ENCODE measurements at regions of chr2 and their contacts with region 1.

Region 1: DNA sequence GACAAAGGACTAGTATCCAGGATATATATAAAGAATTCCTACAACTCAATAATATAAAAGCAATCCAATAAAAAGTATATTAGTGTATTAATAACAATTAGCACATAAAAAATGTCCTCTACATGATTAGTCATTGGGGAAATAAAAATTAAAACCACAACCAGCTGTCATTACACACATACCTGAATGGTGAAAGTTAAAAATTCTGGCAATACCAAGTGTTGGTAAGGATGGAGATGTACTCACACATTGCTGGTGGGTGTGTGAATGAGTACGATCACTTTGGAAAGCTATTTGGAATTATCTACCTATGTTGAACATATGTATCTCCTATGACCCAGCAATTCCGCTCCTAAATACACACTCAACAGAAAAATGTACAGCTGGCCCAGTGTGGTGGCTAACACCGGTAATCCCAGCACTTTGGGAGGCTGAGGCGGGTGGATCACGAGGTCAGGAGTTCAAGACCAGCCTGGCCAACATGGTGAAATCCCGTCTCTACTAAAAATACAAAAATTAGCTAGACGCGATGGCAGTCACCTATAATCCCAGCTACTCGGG is 14.3 kb upstream of the NOL10 start:
- DNase-seq: no peak
- ATAC-seq: no peak
- H3K4me3 ChIP-seq: no peak overlapping the region
- H3K4me3 Mint-ChIP-seq: no peak overlapping the region
- H3K27ac ChIP-seq: no peak overlapping the region
- H3K27ac Mint-ChIP-seq: no peak overlapping the region
- H3K4me1 ChIP-seq: no peaks in the 10 kb centered on the region
- H3K4me1 Mint-ChIP-seq: no peaks in the 10 kb centered on the region
- H3K27me3 ChIP-seq: peaks cover 0 to 22% of the 10 kb centered on the region in 2 experiments
- H3K27me3 Mint-ChIP-seq: peaks cover 23 to 27% of the 10 kb centered on the region in 2 donors

Region 2: GRCh38 chr2:10629819-10630532 is 74.1 kb before region 1 on chr2:
- CTCF ChIA-PET with region 1: no interaction called
- POLR2A ChIA-PET with region 1: interaction called in 1 of 2 experiments, 15 read pairs
- DNase-seq: no peak
- ATAC-seq: no peak
- H3K4me3 ChIP-seq: no peak overlapping the region
- H3K4me3 Mint-ChIP-seq: no peak overlapping the region
- H3K27ac ChIP-seq: no peak overlapping the region
- H3K27ac Mint-ChIP-seq: no peak overlapping the region
- H3K4me1 ChIP-seq: no peaks in the 10 kb centered on the region
- H3K4me1 Mint-ChIP-seq: peaks cover 0 to 5% (median 0%) of the 10 kb centered on the region in 3 donors
- H3K27me3 ChIP-seq: no peaks in the 10 kb centered on the region
- H3K27me3 Mint-ChIP-seq: no peaks in the 10 kb centered on the region

Region 3: DNA sequence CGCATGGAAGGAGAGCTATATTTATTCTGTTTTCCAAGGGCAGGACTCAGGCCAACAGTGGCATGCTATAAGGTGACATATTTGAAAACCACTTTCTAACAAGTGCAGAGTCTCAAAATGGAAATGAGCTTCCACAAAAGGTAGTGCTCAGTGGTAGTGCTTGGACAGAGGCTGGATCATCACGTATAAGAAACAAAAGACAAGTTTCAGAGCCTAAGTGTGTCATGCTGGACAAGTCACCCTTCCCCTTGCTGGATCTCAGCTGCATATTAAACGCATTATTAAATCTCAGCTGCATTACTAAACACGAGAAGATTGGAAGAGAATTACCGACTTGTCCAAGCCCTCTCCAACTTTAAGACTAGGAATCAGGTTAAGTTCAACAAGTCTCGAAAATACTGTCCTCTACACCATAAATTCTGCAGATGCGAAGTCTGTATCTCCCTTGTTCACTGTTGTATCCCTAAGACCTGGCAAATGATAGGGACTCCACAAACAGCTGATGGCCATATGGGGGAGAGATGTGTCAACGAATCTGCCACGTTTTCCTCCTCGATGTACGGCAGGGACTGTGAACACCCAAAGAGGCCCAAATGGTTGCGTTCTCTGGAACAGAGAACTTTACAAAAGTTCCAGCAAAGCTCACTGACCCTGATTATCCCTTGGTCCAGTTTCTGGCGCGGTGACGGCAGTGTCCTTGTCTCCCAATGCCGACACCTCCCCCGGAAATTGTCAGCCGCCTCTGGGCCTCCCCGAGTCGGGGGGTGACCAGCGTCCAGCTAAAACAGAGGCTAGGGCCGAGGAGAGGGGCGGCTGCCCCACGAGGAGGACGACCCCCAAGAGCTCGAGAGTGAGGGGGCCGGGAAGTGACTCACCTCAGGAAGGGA is 14.9 kb before region 1 on chr2:
- CTCF ChIA-PET with region 1: no interaction called
- POLR2A ChIA-PET with region 1: no interaction called
- DNase-seq: peak in 4 of 35 experiments; percentile 2 to 9 (median 3)
- ATAC-seq: peak; percentile 22 to 29 (median 28)
- H3K4me3 ChIP-seq: peak overlapping the region; percentile 98 to 99
- H3K4me3 Mint-ChIP-seq: no peak overlapping the region
- H3K27ac ChIP-seq: peak overlapping the region; percentile 87
- H3K27ac Mint-ChIP-seq: no peak overlapping the region
- H3K4me1 ChIP-seq: peaks cover 10 to 24% of the 10 kb centered on the region in 2 experiments
- H3K4me1 Mint-ChIP-seq: peaks cover 6 to 14% (median 13%) of the 10 kb centered on the region in 3 donors
- H3K27me3 ChIP-seq: no peaks in the 10 kb centered on the region
- H3K27me3 Mint-ChIP-seq: no peaks in the 10 kb centered on the region